ENCODE measurements at regions of chr3 and their contacts with region 1.

Region 1: DNA sequence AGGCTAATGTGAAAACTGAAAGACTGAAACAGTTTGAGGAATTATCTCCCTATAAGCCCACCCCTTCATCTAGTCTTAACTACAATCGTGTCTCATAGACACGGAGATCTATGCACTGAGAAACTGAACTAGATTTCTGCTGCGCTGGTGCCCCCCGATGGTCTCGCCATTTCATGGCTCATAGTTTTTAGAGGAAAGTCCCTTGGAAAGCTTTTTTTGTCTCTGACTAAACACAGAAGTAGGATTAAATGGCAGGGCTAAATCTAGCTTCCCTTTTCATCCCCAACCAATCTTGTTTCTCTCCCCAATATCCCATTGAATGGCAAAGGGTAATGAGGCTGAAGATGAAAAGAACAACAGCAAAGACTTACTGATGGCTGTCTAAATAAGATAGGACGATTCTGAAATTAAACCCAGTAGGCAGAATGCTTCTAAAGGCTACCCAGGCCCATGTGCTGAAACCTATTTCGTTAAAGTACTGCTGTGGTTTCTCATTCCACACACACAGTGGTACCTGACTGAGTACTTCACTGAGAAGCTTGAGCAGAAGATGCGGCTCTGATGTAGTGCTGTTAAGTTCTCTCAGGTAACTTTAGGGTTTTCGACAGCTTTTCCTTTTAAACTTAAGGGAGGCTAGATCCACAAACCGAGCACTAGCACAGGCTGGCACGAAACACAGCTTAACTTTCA is 142.7 kb downstream of the GADL1 start:
- DNase-seq: peak; percentile 8 to 71 (median 54)
- ATAC-seq: peak; percentile 65
- H3K4me3 ChIP-seq: no peak overlapping the region
- H3K4me3 Mint-ChIP-seq: peak overlapping the region in 3 of 10 donors; percentile 16 to 48 (median 45)
- H3K27ac ChIP-seq: no peak overlapping the region
- H3K27ac Mint-ChIP-seq: peak overlapping the region in 1 of 9 donors; percentile 28
- H3K4me1 ChIP-seq: peaks cover 0 to 3% of the 10 kb centered on the region in 2 donors
- H3K4me1 Mint-ChIP-seq: peaks cover 0 to 33% (median 12%) of the 10 kb centered on the region in 7 donors
- H3K27me3 ChIP-seq: no peaks in the 10 kb centered on the region
- H3K27me3 Mint-ChIP-seq: peaks cover 0 to 9% (median 0%) of the 10 kb centered on the region in 5 donors

Region 2: DNA sequence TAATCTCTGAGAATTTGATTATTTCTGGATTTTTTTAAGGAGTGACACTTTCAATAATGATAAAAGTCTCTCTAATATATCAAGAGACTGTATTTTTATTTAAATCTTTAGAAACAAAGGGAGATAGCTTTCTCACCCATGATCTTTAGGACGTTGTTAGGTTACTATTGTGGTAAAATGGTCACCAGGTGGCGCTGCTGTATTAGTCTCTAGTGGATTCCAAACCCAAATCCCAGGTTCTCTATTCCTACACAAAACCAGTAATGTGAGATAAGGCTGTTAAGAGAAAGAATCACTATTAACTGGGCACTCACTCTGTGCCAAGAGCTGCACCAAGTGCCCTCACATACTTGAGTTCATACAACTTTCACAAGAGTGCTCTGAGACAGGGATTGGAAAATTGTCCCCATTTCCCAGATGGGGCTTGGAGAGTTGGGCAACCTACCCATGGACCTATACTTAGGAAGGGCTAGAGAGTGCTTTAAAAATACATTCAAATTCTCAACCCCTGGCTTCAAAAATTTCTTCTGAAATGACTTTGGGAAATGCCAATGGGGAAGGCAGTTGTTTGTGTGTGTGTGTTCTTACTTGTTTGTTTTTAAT is 738.7 kb before region 1 on chr3:
- CTCF ChIA-PET with region 1: interaction called, 3 read pairs
- POLR2A ChIA-PET with region 1: no interaction called
- intact Hi-C with region 1: loop called (anchors 1 kb)
- DNase-seq: peak in 8 of 9 donors; percentile 4 to 32 (median 22)
- ATAC-seq: peak; percentile 56
- H3K4me3 ChIP-seq: no peak overlapping the region
- H3K4me3 Mint-ChIP-seq: no peak overlapping the region
- H3K27ac ChIP-seq: no peak overlapping the region
- H3K27ac Mint-ChIP-seq: no peak overlapping the region
- H3K4me1 ChIP-seq: no peaks in the 10 kb centered on the region
- H3K4me1 Mint-ChIP-seq: peaks cover 0 to 5% (median 0%) of the 10 kb centered on the region in 7 donors
- H3K27me3 ChIP-seq: no peaks in the 10 kb centered on the region
- H3K27me3 Mint-ChIP-seq: peaks cover 0 to 13% (median 6%) of the 10 kb centered on the region in 5 donors

Region 3: GRCh38 chr3:30042274-30042859 is 709.4 kb before region 1 on chr3:
- CTCF ChIA-PET with region 1: interaction called, 44 read pairs
- POLR2A ChIA-PET with region 1: interaction called, 4 read pairs
- intact Hi-C with region 1: loop called (anchors 1 kb)
- DNase-seq: peak in 8 of 9 donors; percentile 25 to 73 (median 63)
- ATAC-seq: peak; percentile 68
- H3K4me3 ChIP-seq: no peak overlapping the region
- H3K4me3 Mint-ChIP-seq: no peak overlapping the region
- H3K27ac ChIP-seq: no peak overlapping the region
- H3K27ac Mint-ChIP-seq: no peak overlapping the region
- H3K4me1 ChIP-seq: no peaks in the 10 kb centered on the region
- H3K4me1 Mint-ChIP-seq: peaks cover 0 to 7% (median 4%) of the 10 kb centered on the region in 7 donors
- H3K27me3 ChIP-seq: no peaks in the 10 kb centered on the region
- H3K27me3 Mint-ChIP-seq: peaks cover 17 to 34% (median 28%) of the 10 kb centered on the region in 5 donors

Region 4: GRCh38 chr3:30319713-30320112 is 432.0 kb before region 1 on chr3:
- CTCF ChIA-PET with region 1: interaction called, 6 read pairs
- POLR2A ChIA-PET with region 1: no interaction called
- intact Hi-C with region 1: loop called in 1 of 2 experiments (anchors 1 kb)
- DNase-seq: peak in 7 of 9 donors; percentile 32 to 72 (median 63)
- ATAC-seq: peak; percentile 90
- H3K4me3 ChIP-seq: no peak overlapping the region
- H3K4me3 Mint-ChIP-seq: peak overlapping the region in 4 of 10 donors; percentile 0 to 7 (median 4)
- H3K27ac ChIP-seq: no peak overlapping the region
- H3K27ac Mint-ChIP-seq: peak overlapping the region in 6 of 9 donors; percentile 1 to 60 (median 43)
- H3K4me1 ChIP-seq: peaks cover 0 to 15% of the 10 kb centered on the region in 2 donors
- H3K4me1 Mint-ChIP-seq: peaks cover 3 to 36% (median 20%) of the 10 kb centered on the region in 7 donors
- H3K27me3 ChIP-seq: no peaks in the 10 kb centered on the region
- H3K27me3 Mint-ChIP-seq: no peaks in the 10 kb centered on the region

Measured in naive thymus-derived CD4-positive, alpha-beta T cell (primary cell).